ENCODE measurements at regions of chr5 and their contacts with region 1.

Region 1: DNA sequence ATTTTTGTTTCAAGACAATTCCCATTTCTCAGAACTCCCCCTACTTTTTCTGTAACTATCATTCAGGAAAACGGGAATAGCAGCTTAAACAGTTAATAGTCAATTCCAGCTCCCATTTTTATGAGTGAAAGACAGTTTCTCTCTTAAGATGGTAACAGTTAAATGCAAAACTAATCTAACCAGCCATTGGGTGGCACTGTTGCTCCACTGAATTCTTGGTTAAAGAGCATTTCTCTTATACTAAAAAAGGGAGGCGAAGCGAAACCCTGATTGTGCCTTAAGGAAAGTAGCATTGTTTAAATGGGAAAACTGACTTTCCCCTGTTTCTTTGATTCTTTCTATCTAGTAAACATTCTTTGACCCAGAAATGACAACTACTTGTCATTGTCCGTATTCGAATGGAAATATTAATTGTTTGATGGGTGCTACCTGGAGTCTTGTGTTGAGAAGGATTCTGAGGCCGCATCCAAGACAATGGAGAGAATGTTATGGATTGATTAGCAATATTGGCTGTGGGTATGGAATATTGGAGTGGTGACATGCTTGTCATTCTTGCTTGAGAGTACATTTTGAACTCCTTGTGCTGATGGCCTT is 507.8 kb downstream of the MAT2B start:
- DNase-seq: peak; percentile 86
- ATAC-seq: peak; percentile 86
- H3K4me3 ChIP-seq: no peak overlapping the region
- H3K27ac ChIP-seq: no peak overlapping the region
- H3K4me1 ChIP-seq: no peaks in the 10 kb centered on the region
- H3K27me3 ChIP-seq: no peaks in the 10 kb centered on the region
- CTCF ChIP-seq: peak; percentile 84
- POLR2A ChIP-seq: no peak
- RAD21 ChIP-seq: peak; percentile 90

Region 2: DNA sequence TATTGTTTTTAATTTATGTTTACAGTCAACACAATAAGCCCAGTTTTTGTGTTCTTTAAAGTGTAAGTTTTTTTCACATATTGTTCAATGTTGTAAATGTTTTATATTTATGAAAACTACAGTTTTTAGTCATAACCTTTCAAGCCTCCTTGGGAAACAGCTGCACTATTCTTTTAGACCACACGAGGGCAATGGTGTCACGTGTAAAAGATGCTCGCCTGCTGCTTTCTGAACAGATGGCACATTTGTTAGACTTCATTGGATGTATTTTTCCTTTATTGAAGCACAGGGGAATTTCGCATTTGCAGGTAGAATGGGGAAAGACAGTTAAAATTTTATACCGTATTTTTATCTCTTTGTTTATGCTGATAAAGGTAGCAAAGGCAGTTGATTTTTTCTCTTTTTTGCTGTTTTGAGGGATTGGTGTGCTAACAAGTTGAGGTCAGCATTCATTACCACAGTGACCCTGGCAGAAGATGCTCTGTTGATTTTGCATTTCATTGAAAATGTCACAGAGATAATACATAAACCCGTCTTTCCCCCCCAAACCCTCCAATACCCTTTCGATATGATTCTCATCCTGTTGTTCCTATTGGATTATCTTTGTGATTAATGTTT is 448.7 kb before region 1 on chr5:
- CTCF ChIA-PET with region 1: interaction called, 3 read pairs
- POLR2A ChIA-PET with region 1: no interaction called
- dilution Hi-C with region 1: no loop called
- in situ Hi-C with region 1: loop called (anchors 10 kb)
- intact Hi-C with region 1: loop called (anchors 2 kb)
- DNase-seq: peak; percentile 69
- ATAC-seq: peak; percentile 68
- H3K4me3 ChIP-seq: no peak overlapping the region
- H3K27ac ChIP-seq: no peak overlapping the region
- H3K4me1 ChIP-seq: peaks cover 5% of the 10 kb centered on the region
- H3K27me3 ChIP-seq: no peaks in the 10 kb centered on the region
- CTCF ChIP-seq: peak; percentile 89
- POLR2A ChIP-seq: no peak
- RAD21 ChIP-seq: peak; percentile 91

Region 3: DNA sequence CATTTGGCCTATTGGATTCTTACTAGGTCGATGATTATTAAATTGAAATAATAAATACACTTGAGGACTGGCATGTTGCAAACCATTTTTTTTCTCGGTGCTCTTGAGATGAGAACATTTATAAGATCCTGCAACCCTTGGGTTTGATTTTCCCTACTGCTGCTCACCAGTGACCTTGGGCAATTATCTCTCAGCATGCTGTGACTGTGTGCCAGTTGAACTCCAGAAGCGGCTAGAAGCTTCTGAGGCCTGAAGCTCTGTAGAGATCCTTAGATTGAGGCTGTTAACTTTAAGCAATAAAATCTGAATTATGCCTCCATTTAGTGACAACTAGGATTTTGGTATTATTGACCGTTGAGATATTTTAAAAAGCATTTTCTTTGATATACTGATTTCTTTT is 18.0 kb before region 1 on chr5:
- CTCF ChIA-PET with region 1: no interaction called
- POLR2A ChIA-PET with region 1: no interaction called
- dilution Hi-C with region 1: no loop called
- in situ Hi-C with region 1: no loop called
- intact Hi-C with region 1: no loop called
- DNase-seq: no peak
- ATAC-seq: no peak
- H3K4me3 ChIP-seq: no peak overlapping the region
- H3K27ac ChIP-seq: no peak overlapping the region
- H3K4me1 ChIP-seq: peaks cover 5% of the 10 kb centered on the region; the same call in 1 of the 2 replicates
- H3K27me3 ChIP-seq: no peaks in the 10 kb centered on the region
- CTCF ChIP-seq: no peak
- POLR2A ChIP-seq: no peak
- RAD21 ChIP-seq: no peak

Region 4: DNA sequence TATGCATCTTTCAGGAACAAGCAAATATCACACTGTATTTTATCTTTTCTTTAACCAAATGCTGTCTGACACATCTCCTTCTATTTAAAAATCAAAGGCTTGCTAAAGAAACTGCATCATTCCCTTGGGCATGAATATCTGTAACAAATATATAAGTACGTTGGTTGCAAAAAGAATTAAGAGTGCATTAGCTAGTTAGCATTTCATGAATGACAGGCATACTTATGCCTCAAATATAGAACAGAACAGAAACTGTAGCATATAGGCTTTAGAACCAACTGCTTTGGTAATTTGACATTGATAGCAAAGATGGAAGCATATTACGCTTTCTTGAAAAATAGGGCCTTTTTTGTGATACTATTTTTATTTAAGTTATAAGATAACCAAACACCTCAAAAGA is 253.4 kb after region 1 on chr5:
- CTCF ChIA-PET with region 1: no interaction called
- POLR2A ChIA-PET with region 1: no interaction called
- dilution Hi-C with region 1: no loop called
- in situ Hi-C with region 1: no loop called
- intact Hi-C with region 1: no loop called
- DNase-seq: no peak
- ATAC-seq: no peak
- H3K4me3 ChIP-seq: no peak overlapping the region
- H3K27ac ChIP-seq: no peak overlapping the region
- H3K4me1 ChIP-seq: no peaks in the 10 kb centered on the region
- H3K27me3 ChIP-seq: no peaks in the 10 kb centered on the region
- CTCF ChIP-seq: no peak
- POLR2A ChIP-seq: no peak
- RAD21 ChIP-seq: no peak

Region 5: GRCh38 chr5:164475339-164475977 is 462.3 kb after region 1 on chr5:
- CTCF ChIA-PET with region 1: interaction called, 8 read pairs
- POLR2A ChIA-PET with region 1: no interaction called
- dilution Hi-C with region 1: loop called (anchors 25 kb)
- in situ Hi-C with region 1: no loop called
- intact Hi-C with region 1: loop called (anchors 1 kb)
- DNase-seq: peak; percentile 56
- ATAC-seq: no peak
- H3K4me3 ChIP-seq: no peak overlapping the region
- H3K27ac ChIP-seq: no peak overlapping the region
- H3K4me1 ChIP-seq: no peaks in the 10 kb centered on the region
- H3K27me3 ChIP-seq: no peaks in the 10 kb centered on the region
- CTCF ChIP-seq: peak; percentile 63
- POLR2A ChIP-seq: no peak
- RAD21 ChIP-seq: peak; percentile 84

Region 6: DNA sequence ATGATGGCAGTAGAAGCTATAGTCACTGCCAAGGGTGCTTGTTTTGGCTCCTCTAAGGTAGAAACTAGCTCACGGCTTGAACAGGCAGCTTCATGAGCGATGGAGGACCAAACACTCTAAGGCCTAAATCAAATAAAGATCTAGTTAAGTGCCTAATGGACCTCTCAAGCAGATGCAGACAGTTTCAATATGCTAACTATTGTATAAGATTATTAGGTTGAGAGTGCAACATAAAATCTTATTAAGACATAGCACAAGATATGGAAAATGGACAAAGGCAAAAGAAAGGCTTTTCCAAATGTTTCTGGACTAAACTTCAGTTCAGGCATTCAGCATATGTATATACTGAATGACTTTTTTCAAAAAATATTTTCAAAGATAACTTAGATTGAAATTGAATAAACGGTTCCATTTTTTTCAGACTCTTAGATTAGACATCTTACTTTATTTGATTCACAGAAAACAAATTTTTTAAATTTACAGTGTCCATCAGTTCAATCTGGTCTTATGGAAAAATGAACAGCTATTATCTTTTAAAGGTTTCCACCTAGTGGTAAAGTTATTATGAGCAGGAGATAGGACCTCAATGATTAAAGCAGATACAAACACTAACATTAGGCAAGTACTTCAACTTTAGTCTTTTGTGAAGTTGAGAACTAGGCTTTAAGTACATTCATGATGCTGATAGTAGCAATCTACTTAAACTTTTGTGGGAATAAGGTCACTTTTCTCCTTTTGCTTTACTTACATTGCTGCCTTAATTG is 659.9 kb after region 1 on chr5:
- CTCF ChIA-PET with region 1: no interaction called
- POLR2A ChIA-PET with region 1: no interaction called
- dilution Hi-C with region 1: no loop called
- in situ Hi-C with region 1: no loop called
- intact Hi-C with region 1: loop called (anchors 10 kb)
- DNase-seq: peak; percentile 17
- ATAC-seq: peak; percentile 69
- H3K4me3 ChIP-seq: no peak overlapping the region
- H3K27ac ChIP-seq: no peak overlapping the region
- H3K4me1 ChIP-seq: 0 out of 2 replicates have a peak, but pooled peaks cover 2% of the 10 kb centered on the region
- H3K27me3 ChIP-seq: no peaks in the 10 kb centered on the region
- CTCF ChIP-seq: peak; percentile 28
- POLR2A ChIP-seq: no peak
- RAD21 ChIP-seq: peak; percentile 16; the same call in 1 of the 2 replicates

Region 7: GRCh38 chr5:165616490-165617430 is 1603.6 kb after region 1 on chr5:
- CTCF ChIA-PET with region 1: no interaction called
- POLR2A ChIA-PET with region 1: no interaction called
- dilution Hi-C with region 1: no loop called
- in situ Hi-C with region 1: no loop called
- intact Hi-C with region 1: loop called (anchors 10 kb)
- DNase-seq: peak; percentile 62
- ATAC-seq: peak; percentile 90
- H3K4me3 ChIP-seq: no peak overlapping the region
- H3K27ac ChIP-seq: no peak overlapping the region
- H3K4me1 ChIP-seq: peaks cover 2% of the 10 kb centered on the region; the same call in 1 of the 2 replicates
- H3K27me3 ChIP-seq: no peaks in the 10 kb centered on the region
- CTCF ChIP-seq: peak; percentile 43
- POLR2A ChIP-seq: no peak
- RAD21 ChIP-seq: peak; percentile 35; the same call in 1 of the 2 replicates

Measured in IMR-90 (cell line).